Activated CD8-positive, alpha-beta T cell treated with anti-CD3 and anti-CD28 coated beads, Interleukin-2, amount 10 ng/mL, durations not matched to agents 7 days and 5 days (primary cell): ENCODE measurements at regions of chr7 and their contacts with region 1.

Region 1: GRCh38 chr7:35624299-35625186 is 70.4 kb downstream of the HERPUD2 start:
- DNase-seq: peak; percentile 54
- ATAC-seq: peak; percentile 78
- H3K4me3 Mint-ChIP-seq: no peak overlapping the region
- H3K27ac Mint-ChIP-seq: no peak overlapping the region
- H3K4me1 Mint-ChIP-seq: no peaks in the 10 kb centered on the region
- H3K27me3 Mint-ChIP-seq: no peaks in the 10 kb centered on the region

Region 2: GRCh38 chr7:35424869-35425495 is 199.6 kb before region 1 on chr7:
- CTCF ChIA-PET with region 1: interaction called, 17 read pairs
- POLR2A ChIA-PET with region 1: no interaction called
- DNase-seq: peak; percentile 68
- ATAC-seq: peak; percentile 64
- H3K4me3 Mint-ChIP-seq: no peak overlapping the region
- H3K27ac Mint-ChIP-seq: no peak overlapping the region
- H3K4me1 Mint-ChIP-seq: no peaks in the 10 kb centered on the region
- H3K27me3 Mint-ChIP-seq: peaks cover 7% of the 10 kb centered on the region

Region 3: DNA sequence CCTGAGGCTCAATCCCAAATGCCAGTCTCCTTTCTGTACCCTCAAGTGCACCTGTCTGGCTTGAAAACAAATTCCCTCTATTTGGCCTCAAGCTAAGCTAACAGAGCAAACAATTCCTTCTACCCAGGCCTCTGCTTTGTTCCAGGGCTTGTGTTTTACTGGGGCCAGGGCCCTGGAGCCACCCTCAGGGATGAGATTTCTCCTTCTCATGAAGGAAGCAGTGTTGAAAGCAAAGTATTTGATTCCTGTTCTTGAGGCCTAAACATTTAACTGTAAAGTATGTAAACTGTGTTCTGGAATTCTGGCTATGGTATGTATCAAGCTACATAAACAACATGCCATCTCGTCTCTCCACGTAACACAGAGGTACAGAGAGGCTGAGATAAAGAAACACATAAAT is 11.4 kb before region 1 on chr7:
- CTCF ChIA-PET with region 1: interaction called, 15 read pairs
- POLR2A ChIA-PET with region 1: no interaction called
- DNase-seq: no peak
- ATAC-seq: no peak
- H3K4me3 Mint-ChIP-seq: no peak overlapping the region
- H3K27ac Mint-ChIP-seq: no peak overlapping the region
- H3K4me1 Mint-ChIP-seq: no peaks in the 10 kb centered on the region
- H3K27me3 Mint-ChIP-seq: no peaks in the 10 kb centered on the region

Region 4: GRCh38 chr7:35647171-35647574 is 22.6 kb after region 1 on chr7:
- CTCF ChIA-PET with region 1: interaction called, 53 read pairs
- POLR2A ChIA-PET with region 1: no interaction called
- DNase-seq: no peak
- ATAC-seq: no peak
- H3K4me3 Mint-ChIP-seq: no peak overlapping the region
- H3K27ac Mint-ChIP-seq: no peak overlapping the region
- H3K4me1 Mint-ChIP-seq: peaks cover 32% of the 10 kb centered on the region
- H3K27me3 Mint-ChIP-seq: no peaks in the 10 kb centered on the region

Region 5: GRCh38 chr7:35681231-35682029 is 56.9 kb after region 1 on chr7:
- CTCF ChIA-PET with region 1: no interaction called
- POLR2A ChIA-PET with region 1: no interaction called
- DNase-seq: no peak
- ATAC-seq: peak; percentile 72
- H3K4me3 Mint-ChIP-seq: no peak overlapping the region
- H3K27ac Mint-ChIP-seq: no peak overlapping the region
- H3K4me1 Mint-ChIP-seq: peaks cover 38% of the 10 kb centered on the region
- H3K27me3 Mint-ChIP-seq: no peaks in the 10 kb centered on the region

Region 6: DNA sequence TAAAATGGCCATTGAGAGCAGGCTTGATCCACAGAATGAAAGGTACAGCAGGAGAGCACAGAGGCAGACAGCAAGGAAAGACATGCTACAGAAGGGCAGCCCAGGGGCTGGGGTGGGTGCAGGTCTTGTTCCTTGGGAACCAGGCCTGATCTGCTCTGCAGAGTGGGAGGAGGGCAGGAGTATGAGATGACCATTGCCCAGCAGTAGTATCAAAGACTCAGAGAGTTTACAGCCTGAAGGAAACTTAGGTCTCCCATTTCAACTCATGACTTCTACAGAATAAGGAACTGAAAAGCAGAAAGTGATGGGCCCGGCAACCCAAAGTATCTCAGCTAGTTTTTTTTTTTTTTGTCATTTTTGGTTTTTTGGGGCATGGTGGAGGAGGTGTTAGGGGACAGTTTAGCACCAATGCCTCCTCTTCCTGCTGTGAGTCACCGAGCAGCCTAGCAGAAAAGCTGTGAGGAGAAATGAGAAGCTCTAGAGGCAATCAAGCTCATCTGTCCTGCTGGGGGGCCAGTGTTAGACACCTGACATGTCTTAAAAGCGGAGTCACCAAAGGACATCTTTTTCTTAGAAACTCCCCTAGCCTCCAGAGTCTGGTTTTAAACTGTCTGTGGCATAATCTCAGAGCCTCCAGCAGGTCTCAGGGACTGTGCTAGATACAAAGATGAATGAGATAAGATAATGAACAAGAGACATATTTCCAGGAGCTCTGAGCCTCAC is 104.7 kb after region 1 on chr7:
- CTCF ChIA-PET with region 1: interaction called, 11 read pairs
- POLR2A ChIA-PET with region 1: no interaction called
- DNase-seq: peak; percentile 64
- ATAC-seq: peak; percentile 53
- H3K4me3 Mint-ChIP-seq: peak overlapping the region; percentile 34
- H3K27ac Mint-ChIP-seq: peak overlapping the region; percentile 78
- H3K4me1 Mint-ChIP-seq: peaks cover 62% of the 10 kb centered on the region
- H3K27me3 Mint-ChIP-seq: peaks cover 1% of the 10 kb centered on the region

Region 7: GRCh38 chr7:35906191-35906908 is 281.8 kb after region 1 on chr7:
- CTCF ChIA-PET with region 1: interaction called, 16 read pairs
- POLR2A ChIA-PET with region 1: no interaction called
- DNase-seq: peak; percentile 80
- ATAC-seq: peak; percentile 85
- H3K4me3 Mint-ChIP-seq: no peak overlapping the region
- H3K27ac Mint-ChIP-seq: no peak overlapping the region
- H3K4me1 Mint-ChIP-seq: peaks cover 13% of the 10 kb centered on the region
- H3K27me3 Mint-ChIP-seq: no peaks in the 10 kb centered on the region